GM10248 (cell line): ENCODE measurements at regions of chr3 and their contacts with region 1.

Region 1: GRCh38 chr3:121995161-121996137 is 26.6 kb downstream of the ILDR1 start:
- DNase-seq: peak; percentile 51
- CTCF ChIP-seq: peak; percentile 53

Region 2: DNA sequence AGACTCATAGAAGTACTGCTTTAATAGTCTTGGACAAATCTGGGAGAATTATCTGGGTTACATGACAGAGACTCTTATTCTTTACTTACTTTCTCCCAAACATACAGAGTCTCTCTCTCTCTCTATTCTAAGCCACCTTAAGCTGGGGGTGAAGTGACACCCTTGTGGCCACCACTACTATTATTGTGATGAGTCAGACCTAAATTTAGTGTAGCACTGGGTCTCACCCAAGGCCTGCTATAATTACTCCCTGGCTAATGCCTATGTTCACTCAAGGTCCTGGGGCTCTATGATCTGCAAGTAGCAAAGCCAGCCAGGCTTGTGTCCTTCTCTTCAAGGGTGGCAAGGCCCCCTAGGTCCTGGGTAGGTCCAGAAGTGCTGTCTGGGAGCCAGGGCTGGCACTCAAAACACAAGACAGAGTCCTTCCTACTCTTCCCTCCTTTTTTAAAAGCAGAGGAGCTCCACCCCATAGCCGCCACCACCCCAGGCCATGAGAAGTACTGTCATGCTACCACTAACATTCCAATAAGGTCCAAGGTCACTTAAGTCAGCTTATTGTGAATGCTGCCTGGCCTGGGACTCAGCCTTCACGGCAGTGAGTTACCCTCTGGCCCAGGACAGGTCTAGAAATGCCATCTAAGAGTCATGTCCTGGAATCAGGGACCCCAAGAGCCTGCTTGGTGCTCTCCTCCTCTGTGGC is 633.3 kb before region 1 on chr3:
- CTCF ChIA-PET with region 1: no interaction called
- POLR2A ChIA-PET with region 1: no interaction called
- DNase-seq: no peak
- CTCF ChIP-seq: no peak

Region 3: DNA sequence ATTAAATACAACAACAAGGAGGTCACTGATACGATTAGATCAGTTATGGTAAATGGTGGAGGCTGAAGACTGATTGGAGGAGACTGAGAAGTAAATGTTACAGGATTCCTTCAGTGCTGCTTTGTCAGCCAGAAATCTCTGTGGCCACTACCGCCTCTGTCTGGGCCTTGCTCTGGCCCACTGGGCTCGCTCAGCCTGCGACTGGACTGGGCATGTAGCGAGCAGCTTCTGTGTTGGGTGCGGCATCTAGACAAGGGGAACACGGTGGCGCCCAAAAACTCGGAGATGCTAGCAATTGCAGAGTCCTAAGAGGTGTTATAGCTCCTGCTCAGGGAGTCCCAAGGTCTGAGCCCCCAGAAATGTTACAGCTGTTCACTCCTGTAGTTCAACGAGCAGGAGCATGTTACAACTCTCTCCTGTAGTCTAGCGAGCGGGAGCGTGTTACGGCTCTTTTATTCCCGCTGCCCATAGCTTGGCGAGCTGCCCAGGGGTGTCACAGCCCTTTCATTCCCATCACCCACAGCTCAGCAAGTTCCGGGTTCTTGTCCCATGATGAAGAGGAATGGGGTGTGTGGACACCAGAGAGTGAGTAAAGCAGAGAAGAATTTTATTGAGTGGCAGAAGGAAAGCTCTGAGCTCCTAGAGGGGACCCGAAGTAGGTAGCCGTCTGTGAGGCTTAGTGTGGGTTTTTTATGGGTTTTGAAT is 76.5 kb before region 1 on chr3:
- CTCF ChIA-PET with region 1: no interaction called
- POLR2A ChIA-PET with region 1: no interaction called
- DNase-seq: no peak
- CTCF ChIP-seq: no peak

Region 4: DNA sequence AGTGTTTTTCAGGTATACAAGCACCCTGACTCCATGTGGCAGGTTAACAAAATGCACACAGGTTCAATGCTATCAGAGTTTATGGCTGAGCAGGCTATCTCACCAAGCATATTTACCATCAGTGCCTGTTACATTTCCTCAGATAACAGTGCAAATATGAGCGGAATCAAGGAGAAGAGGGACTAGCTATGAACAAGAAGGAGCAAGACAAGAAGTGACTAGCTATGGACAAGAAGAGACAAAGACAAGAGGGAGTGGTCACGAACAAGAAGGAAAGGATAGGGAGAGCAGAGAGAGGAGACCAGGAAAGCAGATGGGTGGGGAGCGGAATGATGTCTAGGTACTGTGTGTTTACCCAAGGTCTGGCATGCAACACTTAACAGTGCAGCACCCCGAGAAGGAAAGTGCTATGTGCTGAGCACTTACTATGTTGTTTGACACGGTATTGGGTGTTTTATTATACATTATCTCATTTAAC is 18.0 kb after region 1 on chr3:
- CTCF ChIA-PET with region 1: interaction called, 43 read pairs
- POLR2A ChIA-PET with region 1: no interaction called
- DNase-seq: no peak
- CTCF ChIP-seq: no peak

Region 5: GRCh38 chr3:122021811-122022401 is 26.5 kb after region 1 on chr3 and contains the start of gene ILDR1:
- CTCF ChIA-PET with region 1: interaction called, 20 read pairs
- POLR2A ChIA-PET with region 1: interaction called, 3 read pairs
- DNase-seq: peak; percentile 72
- CTCF ChIP-seq: no peak

Region 6: DNA sequence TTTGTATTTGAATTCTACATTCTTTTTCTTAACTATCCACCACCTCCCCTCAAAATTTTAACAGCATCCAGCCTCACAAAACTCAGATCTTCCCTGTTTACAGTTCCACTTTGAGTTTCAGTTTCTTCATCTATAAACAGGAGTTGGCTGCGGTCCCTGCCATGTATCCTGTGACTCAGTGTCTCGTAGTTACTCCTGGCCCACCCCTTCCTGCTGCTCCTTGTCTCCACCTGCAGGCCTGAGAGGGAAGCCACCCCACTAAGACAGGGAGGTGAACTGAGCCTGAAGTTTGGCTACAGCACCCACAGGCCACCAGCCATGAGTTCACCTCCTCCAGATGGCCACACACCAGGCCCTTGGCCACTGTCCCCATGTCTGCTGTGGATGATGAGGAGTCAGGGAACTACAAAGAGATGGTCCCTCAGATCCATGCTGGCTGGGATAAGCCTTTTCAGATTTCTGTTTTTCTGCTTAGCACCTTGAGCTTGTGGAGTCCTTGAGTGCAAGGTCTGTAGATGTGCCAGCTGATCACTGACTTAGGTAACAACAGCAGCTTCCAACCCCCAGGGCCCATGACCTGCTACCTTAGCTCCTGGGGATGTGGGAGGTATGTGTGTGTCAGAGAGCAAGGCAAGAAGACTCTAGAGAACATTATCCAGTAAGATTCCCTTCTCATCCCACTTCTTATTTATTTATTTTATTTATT is 97.2 kb after region 1 on chr3:
- CTCF ChIA-PET with region 1: interaction called, 13 read pairs
- POLR2A ChIA-PET with region 1: interaction called, 3 read pairs
- DNase-seq: no peak
- CTCF ChIP-seq: peak; percentile 71

Region 7: DNA sequence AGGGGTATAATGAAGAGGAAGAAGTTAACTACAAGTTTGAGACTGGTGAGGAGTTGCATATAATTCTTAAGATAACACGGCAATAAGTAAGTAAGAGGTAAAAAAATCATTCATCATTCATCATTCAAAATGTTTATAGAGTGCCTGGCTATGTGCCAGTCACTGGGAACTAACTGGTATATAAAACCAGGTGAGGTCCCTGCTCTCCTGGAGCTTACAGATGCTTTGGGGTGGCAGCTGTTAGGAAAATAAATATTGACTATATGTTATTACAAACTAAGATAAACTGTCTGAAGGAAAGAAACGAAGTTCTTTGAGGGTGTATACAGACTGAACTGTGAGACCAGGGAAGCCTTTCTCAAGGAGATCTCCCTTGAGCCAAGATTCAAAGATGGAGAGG is 190.9 kb after region 1 on chr3:
- CTCF ChIA-PET with region 1: no interaction called
- POLR2A ChIA-PET with region 1: no interaction called
- DNase-seq: no peak
- CTCF ChIP-seq: no peak